Spleen (tissue), 13 donors: ENCODE measurements at regions of chr9 and their contacts with region 1.

Region 1: GRCh38 chr9:104556830-104557634 is 11.9 kb upstream of the OR13C8 start:
- DNase-seq: no peak
- H3K4me3 ChIP-seq: no peak overlapping the region
- H3K27ac ChIP-seq: no peak overlapping the region
- H3K4me1 ChIP-seq: no peaks in the 10 kb centered on the region
- H3K27me3 ChIP-seq: no peaks in the 10 kb centered on the region
- CTCF ChIP-seq: no peak
- POLR2A ChIP-seq: no peak

Region 2: GRCh38 chr9:103574056-103574455 is 983.0 kb before region 1 on chr9:
- intact Hi-C with region 1: no loop called
- DNase-seq: no peak
- H3K4me3 ChIP-seq: no peak overlapping the region
- H3K27ac ChIP-seq: no peak overlapping the region
- H3K4me1 ChIP-seq: no peaks in the 10 kb centered on the region
- H3K27me3 ChIP-seq: no peaks in the 10 kb centered on the region
- CTCF ChIP-seq: no peak
- POLR2A ChIP-seq: no peak

Region 3: GRCh38 chr9:104617418-104617817 is 60.4 kb after region 1 on chr9:
- intact Hi-C with region 1: loop called (anchors 10 kb)
- DNase-seq: no peak
- H3K4me3 ChIP-seq: no peak overlapping the region
- H3K27ac ChIP-seq: no peak overlapping the region
- H3K4me1 ChIP-seq: no peaks in the 10 kb centered on the region
- H3K27me3 ChIP-seq: no peaks in the 10 kb centered on the region
- CTCF ChIP-seq: no peak
- POLR2A ChIP-seq: no peak

Region 4: GRCh38 chr9:104747558-104748358 is 190.7 kb after region 1 on chr9 and contains the start of gene NIPSNAP3A:
- intact Hi-C with region 1: no loop called
- DNase-seq: peak; percentile 97
- H3K4me3 ChIP-seq: peak within 1 kb of the TSS; percentile 68 to 87 (median 79)
- H3K27ac ChIP-seq: peak within 1 kb of the TSS; percentile 88 to 97 (median 96)
- H3K4me1 ChIP-seq: peaks cover 11 to 46% (median 26%) of the 10 kb centered on the region in 6 donors
- H3K27me3 ChIP-seq: no peaks in the 10 kb centered on the region
- CTCF ChIP-seq: peak in 1 of 11 experiments; percentile 18
- POLR2A ChIP-seq: peak in 2 of 3 donors; percentile 16 to 28
- total RNA-seq, gene NIPSNAP3A: 20.8 to 28.5 (median 23.8) TPM